ENCODE measurements at regions of chr13 and their contacts with region 1.

Region 1: GRCh38 chr13:20495082-20496023 is 30.3 kb downstream of the CRYL1 start:
- DNase-seq: peak in 8 of 10 donors; percentile 29 to 87 (median 63)

Region 2: DNA sequence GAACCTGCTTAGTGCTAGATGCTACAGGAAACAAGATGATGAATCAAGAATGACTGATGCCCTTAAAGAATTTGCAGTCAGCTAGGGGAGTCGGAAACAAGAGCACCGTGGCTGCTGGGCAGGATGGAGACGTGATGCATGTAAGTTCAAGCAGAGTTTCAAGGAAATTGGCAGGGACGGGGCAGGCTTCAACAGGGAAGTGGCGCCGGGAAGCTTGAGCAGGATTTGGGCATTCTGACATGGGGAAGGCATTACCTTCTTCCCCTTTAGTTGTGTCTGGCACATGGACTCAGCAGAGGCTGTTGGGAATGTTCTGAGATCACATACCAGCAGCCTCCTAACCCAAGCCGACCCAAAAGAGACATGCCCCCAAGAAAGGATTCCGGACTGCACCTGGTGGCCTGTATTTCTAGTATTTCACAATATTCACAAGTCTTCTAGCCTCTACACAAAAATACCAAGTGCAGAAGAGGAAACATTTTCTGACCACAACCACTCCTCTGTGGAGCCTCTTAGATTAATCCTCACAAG is 107.8 kb before region 1 on chr13:
- intact Hi-C with region 1: no loop called
- DNase-seq: no peak

Region 3: GRCh38 chr13:20828539-20829364 is 333.4 kb after region 1 on chr13:
- intact Hi-C with region 1: loop called (anchors 1 kb)
- DNase-seq: no peak